Motor neuron (in vitro differentiated cells): ENCODE measurements at regions of chr3 and their contacts with region 1.

Region 1: DNA sequence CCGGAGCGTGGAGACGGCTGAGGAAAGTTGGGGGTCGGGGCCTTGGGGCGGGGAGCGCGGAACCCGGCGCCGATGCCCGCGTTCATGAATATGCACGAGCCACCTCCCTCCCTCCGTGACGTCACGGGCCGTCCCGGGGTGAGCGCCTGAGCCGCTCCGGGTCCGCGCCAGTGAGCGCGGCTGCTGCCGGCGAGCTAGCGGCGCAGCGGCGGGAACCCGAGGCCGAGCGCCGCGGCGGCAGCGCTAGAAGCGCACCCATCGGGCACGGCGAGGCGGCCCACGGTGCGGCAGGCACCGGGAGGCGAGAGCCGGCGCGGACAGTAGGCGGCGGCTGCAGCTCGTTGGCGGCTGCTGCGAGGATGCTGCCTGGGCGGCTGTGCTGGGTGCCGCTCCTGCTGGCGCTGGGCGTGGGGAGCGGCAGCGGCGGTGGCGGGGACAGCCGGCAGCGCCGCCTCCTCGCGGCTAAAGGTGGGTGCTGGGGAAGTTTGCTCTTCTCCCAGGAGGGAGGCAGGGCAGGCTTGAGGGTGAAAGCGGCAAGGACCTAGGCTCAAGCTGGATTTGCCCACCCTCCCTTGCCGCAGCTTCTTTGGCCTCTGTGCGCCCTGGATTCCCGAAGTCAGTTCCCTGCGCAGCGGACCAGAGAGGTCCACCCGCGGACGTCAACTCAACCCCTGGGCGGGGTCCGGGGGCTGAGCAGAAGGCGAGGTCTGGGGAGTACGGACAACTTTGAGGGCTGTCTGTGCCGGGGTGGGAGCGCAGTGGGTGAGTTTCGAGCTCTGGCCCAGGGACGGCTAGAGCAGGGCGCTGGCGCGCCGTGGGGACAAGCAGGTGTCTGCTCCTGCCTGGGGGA is at the start of gene CLSTN2:
- ATAC-seq: peak; percentile 83 to 92 (median 86)
- H3K4me3 ChIP-seq: peak within 1 kb of the TSS; percentile 54 to 88 (median 69)
- H3K27ac ChIP-seq: peak within 1 kb of the TSS; percentile 23 to 42
- H3K4me1 ChIP-seq: peaks cover 3 to 12% of the 10 kb centered on the region in 2 donors
- total RNA-seq, gene CLSTN2: 1.2 to 125 (median 27.9) TPM

Region 2: DNA sequence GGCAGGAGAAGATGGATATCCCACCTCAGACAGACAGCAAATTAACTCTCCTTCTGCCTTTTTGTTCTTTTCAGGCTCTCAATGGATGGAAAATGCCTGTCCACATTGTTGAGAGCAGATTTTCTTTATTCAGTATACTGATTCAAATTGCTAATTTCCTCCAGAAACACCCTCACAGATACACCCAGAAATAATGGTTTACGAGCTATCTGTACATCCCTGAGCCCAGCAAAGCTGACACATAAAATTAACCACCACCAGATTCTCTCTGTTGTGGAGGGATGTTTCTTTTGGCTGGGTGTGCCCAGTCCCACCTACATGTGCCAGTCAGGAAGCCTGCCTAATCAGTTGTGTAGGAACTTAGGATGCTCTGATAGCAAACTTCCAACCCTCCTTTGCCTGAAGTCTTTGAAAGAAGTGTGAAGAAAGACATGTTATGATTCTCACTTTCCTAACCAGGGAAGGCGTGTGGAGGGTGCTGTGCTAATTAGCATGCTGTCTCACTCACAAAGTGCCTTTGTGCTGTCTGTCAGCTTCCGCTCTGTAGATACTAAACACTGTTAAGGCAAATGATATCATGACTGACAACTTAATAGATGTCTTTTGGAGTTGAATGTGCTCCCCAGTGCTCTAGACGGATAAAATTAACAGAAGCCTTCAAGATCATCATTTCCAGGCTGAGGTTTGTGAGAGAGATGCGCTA is 208.3 kb after region 1 on chr3:
- in situ Hi-C with region 1: no loop called
- ATAC-seq: peak in 7 of 8 experiments; percentile 37 to 77 (median 59)
- H3K4me3 ChIP-seq: no peak overlapping the region
- H3K27ac ChIP-seq: no peak overlapping the region
- H3K4me1 ChIP-seq: peaks cover 12 to 16% of the 10 kb centered on the region in 2 donors

Region 3: DNA sequence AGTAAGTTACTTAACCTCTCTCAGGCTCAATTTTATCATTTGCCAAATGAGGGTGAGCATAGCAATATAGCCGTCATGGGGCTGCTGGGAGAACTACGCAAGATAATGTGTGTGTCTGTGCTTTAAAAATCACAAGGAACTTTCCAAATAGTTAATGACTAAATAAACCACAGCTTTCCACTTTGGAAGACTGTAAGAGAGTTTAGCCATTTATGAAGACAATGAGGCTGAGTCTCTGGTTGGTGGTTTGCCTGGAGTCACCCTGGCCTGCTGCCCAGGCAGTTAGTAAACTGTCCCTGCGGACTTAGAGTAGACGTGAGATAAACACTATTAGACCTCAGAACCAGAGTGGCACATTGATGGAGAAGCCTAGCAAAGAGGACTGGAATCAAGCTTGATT is 357.4 kb after region 1 on chr3:
- in situ Hi-C with region 1: no loop called
- ATAC-seq: peak in 2 of 8 experiments; percentile 20 to 30
- H3K4me3 ChIP-seq: no peak overlapping the region
- H3K27ac ChIP-seq: no peak overlapping the region
- H3K4me1 ChIP-seq: peaks cover 0 to 19% of the 10 kb centered on the region in 2 donors

Region 4: DNA sequence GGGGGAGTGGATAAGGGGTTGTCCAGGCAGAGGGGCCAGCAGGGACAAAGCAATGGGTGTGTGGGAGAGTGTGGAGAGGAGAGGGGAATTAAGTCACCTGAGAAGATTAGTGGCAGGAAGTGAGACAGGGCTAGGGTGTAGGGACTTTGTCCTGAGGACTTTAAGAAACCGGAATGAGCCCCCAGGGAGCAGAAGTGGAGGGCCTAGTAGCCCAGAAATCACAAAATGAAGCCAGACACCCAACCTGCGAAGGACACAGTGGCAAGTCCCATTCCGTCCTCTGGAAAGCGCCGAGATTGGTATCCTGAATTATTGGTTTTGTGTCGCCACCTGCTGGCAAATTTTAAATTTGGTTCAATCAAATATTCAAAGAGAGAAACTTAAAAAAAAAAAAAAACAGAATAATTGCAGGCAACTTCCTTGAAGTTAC is 928.4 kb after region 1 on chr3:
- in situ Hi-C with region 1: loop called in 2 of 9 experiments (anchors 25 kb)
- ATAC-seq: peak; percentile 59 to 87 (median 68)
- H3K4me3 ChIP-seq: no peak overlapping the region
- H3K27ac ChIP-seq: no peak overlapping the region
- H3K4me1 ChIP-seq: no peaks in the 10 kb centered on the region